ENCODE measurements at regions of chr1 and their contacts with region 1.

Region 1: GRCh38 chr1:226940029-226940805 is at the start of gene COQ8A:
- DNase-seq: peak; percentile 99
- H3K4me3 Mint-ChIP-seq: peak within 1 kb of the TSS; percentile 87
- H3K27ac Mint-ChIP-seq: peak within 1 kb of the TSS; percentile 96
- H3K4me1 Mint-ChIP-seq: peaks cover 32% of the 10 kb centered on the region
- H3K27me3 Mint-ChIP-seq: no peaks in the 10 kb centered on the region
- total RNA-seq, gene COQ8A: 28.0 and 30.4 TPM in 2 replicates

Region 2: GRCh38 chr1:226711976-226712741 is 228.1 kb before region 1 on chr1:
- intact Hi-C with region 1: no loop called
- DNase-seq: peak; percentile 62
- H3K4me3 Mint-ChIP-seq: peak overlapping the region; percentile 47
- H3K27ac Mint-ChIP-seq: peak overlapping the region; percentile 67
- H3K4me1 Mint-ChIP-seq: peaks cover 80% of the 10 kb centered on the region
- H3K27me3 Mint-ChIP-seq: no peaks in the 10 kb centered on the region

Region 3: DNA sequence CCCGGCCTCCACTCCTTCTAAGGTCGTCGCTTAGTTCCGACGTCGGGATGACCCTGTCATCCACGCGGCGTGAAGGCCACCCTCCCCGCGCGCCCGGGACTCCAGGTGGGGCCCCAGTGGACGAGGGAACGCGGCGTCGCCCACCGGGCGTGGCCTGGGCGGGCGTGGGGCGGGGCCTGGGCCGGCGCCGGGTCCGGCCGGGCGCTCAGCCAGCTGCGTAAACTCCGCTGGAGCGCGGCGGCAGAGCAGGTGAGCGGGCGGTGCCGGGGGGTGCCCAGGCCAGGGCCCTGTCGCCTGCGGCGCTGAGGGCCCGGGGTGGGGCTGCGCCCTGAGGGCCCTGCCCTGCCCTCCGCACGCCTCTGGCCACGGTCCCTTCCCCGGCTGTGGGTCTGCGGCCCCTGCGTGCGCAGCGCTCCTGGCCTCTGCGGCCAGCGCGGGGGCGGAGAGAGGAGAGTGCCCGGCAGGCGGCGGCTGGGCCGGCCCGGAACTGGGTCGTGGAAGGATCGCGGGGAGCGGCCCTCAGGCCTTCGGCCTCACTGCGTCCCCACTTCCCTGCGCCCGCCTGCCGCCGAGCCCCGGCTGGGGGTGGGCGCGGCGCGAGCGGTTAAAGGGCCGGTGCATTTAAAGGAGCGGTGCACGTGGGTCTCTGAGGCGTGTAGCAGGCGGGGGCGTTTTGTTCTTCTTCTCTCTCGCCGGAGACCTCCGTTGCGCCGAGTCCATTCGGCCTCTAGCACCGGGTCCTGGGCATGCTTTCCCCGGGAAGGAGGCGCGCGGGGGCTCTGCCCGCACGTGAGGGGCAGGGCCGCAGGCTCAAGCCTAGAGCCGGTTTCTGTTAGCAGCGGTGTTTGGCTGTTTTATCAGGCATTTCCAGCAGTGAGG is 69.6 kb before region 1 on chr1 and contains the start of gene PSEN2:
- intact Hi-C with region 1: loop called (anchors 2 kb)
- DNase-seq: peak; percentile 57
- H3K4me3 Mint-ChIP-seq: peak within 1 kb of the TSS; percentile 79
- H3K27ac Mint-ChIP-seq: no peak within 1 kb of the TSS
- H3K4me1 Mint-ChIP-seq: peaks cover 23% of the 10 kb centered on the region
- H3K27me3 Mint-ChIP-seq: peaks cover 4% of the 10 kb centered on the region
- total RNA-seq, gene PSEN2: 13.9 and 17.0 TPM in 2 replicates

Region 4: DNA sequence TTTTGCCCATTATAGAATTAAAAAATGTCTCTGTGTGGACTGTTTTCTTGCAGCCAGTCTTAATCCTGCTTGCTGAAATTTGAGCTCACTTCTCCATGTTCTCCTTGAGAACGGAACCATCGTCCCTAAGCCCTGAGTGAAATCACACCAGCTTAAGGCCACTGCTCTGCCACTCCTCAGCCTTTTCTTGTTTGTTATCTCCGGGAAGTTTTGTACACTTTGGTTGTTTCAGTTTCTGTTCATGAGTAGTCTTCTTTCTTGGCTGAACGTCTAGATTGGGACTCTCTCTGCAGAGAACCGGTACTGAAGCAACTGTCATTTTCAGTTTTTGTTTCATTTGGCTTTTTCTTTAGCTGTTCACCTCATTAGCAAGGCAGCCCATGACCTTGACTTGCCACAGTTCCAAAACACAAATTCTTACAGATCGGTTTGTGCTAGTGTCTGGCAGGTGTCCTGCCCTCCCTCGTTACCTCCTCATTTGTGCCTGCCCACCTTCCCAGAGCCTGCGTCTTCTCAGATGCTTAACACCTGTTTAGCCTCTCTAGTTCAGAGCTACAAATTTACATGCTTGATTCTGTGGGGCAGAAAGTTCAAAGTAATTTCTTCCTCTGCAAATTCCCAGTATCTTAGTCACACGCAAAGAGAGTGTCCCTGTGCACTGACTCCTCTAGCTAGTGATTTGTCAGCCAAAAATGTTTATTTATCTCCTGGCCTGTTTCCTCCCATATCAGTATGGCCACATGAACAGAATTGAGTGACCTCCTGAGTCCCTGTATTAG is 57.4 kb before region 1 on chr1:
- intact Hi-C with region 1: loop called (anchors 1 kb)
- DNase-seq: peak; percentile 39
- H3K4me3 Mint-ChIP-seq: peak overlapping the region; percentile 74
- H3K27ac Mint-ChIP-seq: peak overlapping the region; percentile 96
- H3K4me1 Mint-ChIP-seq: peaks cover 57% of the 10 kb centered on the region
- H3K27me3 Mint-ChIP-seq: no peaks in the 10 kb centered on the region

Region 5: GRCh38 chr1:227318003-227318852 is 378.0 kb after region 1 on chr1 and contains the start of gene CDC42BPA:
- intact Hi-C with region 1: loop called (anchors 5 kb)
- DNase-seq: peak; percentile 23
- H3K4me3 Mint-ChIP-seq: peak within 1 kb of the TSS; percentile 83
- H3K27ac Mint-ChIP-seq: peak within 1 kb of the TSS; percentile 33
- H3K4me1 Mint-ChIP-seq: peaks cover 24% of the 10 kb centered on the region
- H3K27me3 Mint-ChIP-seq: peaks cover 59% of the 10 kb centered on the region
- total RNA-seq, gene CDC42BPA: 6.6 and 7.1 TPM in 2 replicates

Region 6: DNA sequence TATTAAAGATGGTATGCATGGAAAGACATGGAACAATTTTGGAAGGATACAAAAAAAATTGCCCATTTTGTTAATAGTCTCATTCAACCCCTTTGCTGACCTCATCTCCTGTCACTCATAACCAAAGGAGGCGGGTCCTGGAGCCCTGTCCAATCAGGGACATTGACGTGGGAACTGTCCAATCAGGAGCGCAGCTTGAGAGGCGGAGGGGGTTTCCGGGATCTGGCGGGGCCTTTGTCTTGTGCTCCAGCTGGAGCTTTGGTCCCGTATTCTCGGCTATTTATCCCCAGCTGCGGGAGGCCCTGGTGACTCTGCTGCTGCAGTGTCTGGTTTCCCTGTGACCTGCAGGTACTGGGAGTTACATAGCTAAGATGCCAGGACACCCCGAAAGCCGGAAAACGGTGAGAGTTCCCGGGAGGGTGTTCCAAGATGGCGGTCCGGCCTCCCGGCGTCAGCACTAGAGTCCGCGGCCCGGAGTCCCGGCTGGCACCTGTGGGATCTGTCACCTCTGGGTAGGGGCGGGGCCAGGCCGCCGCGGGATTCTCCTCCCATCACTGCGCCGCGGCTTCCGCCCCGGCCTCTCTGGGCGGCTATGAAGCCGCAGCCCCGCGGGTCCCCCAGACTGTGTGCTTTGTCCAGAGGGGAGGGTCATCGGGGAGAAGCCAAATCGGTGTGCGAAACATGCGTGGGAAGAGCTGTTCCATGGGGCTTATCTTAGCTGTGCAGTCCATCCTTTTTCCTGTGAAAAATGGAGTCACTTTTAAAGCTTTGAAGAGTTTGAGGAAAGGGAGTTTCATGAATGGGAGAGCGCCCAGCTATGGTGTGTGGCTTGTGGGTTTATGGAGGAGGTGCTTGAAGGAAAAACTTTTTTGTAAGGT is 623.3 kb after region 1 on chr1 and contains the start of gene ZNF678:
- intact Hi-C with region 1: loop called (anchors 2 kb)
- DNase-seq: peak; percentile 81
- H3K4me3 Mint-ChIP-seq: peak within 1 kb of the TSS; percentile 87
- H3K27ac Mint-ChIP-seq: peak within 1 kb of the TSS; percentile 87
- H3K4me1 Mint-ChIP-seq: peaks cover 13% of the 10 kb centered on the region
- H3K27me3 Mint-ChIP-seq: peaks cover 24% of the 10 kb centered on the region
- total RNA-seq, gene ZNF678: 5.1 and 5.7 TPM in 2 replicates